ENCODE measurements at regions of chr14 and their contacts with region 1.

Region 1: GRCh38 chr14:85296456-85297210 is 233.3 kb upstream of the FLRT2 start:
- DNase-seq: no peak

Region 2: GRCh38 chr14:85333313-85333712 is 36.7 kb after region 1 on chr14:
- intact Hi-C with region 1: no loop called
- DNase-seq: no peak

Region 3: DNA sequence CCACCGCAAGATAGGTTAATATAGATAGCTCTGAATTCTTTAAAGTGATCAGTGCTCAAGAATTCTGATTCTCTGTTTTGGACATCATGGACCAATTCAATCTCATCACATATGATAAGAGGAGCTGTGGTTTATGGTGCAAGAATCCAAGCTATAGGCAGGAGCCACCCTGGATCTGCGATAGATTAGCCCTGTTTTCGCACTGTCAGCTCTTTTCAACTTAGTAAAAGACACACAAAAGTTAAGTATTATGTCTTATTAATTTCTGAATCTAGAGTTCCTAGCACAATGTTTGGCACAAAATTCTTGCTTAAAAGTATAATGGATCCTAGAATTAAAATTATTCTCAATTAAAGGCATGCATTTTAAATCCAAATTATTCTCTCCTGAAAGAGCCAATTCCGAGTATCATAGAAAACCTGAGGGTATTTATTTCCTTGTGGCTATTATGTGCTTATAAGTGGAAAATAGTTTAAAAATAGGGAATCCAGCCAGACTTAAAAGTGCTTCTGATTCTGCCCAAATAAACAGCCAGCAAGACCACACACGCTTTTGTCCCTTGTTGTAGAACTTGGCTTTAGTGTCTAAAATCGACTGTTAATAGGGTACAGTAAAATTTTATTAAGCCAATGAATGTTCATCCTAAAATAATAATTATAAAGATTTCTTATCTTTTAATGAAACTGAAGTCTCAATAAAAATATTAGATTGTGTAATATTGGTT is 48.4 kb after region 1 on chr14:
- intact Hi-C with region 1: no loop called
- DNase-seq: no peak

Region 4: GRCh38 chr14:85483037-85483436 is 186.4 kb after region 1 on chr14:
- intact Hi-C with region 1: no loop called
- DNase-seq: no peak

Region 5: GRCh38 chr14:85752175-85752574 is 455.5 kb after region 1 on chr14:
- intact Hi-C with region 1: loop called in 1 of 2 experiments (anchors 10 kb)
- DNase-seq: no peak